PC-9 (cell line): ENCODE measurements at regions of chr9 and their contacts with region 1.

Region 1: GRCh38 chr9:82080265-82080664 is 91.7 kb downstream of the SPATA31D1 start:
- DNase-seq: no peak
- H3K4me3 ChIP-seq: no peak overlapping the region
- H3K27ac ChIP-seq: no peak overlapping the region
- H3K4me1 ChIP-seq: no peaks in the 10 kb centered on the region
- H3K27me3 ChIP-seq: no peaks in the 10 kb centered on the region
- CTCF ChIP-seq: no peak

Region 2: GRCh38 chr9:81999806-82000205 is 80.5 kb before region 1 on chr9:
- CTCF ChIA-PET with region 1: no interaction called
- POLR2A ChIA-PET with region 1: no interaction called
- intact Hi-C with region 1: no loop called
- DNase-seq: no peak
- H3K4me3 ChIP-seq: no peak overlapping the region
- H3K27ac ChIP-seq: no peak overlapping the region
- H3K4me1 ChIP-seq: no peaks in the 10 kb centered on the region
- H3K27me3 ChIP-seq: no peaks in the 10 kb centered on the region
- CTCF ChIP-seq: no peak

Region 3: DNA sequence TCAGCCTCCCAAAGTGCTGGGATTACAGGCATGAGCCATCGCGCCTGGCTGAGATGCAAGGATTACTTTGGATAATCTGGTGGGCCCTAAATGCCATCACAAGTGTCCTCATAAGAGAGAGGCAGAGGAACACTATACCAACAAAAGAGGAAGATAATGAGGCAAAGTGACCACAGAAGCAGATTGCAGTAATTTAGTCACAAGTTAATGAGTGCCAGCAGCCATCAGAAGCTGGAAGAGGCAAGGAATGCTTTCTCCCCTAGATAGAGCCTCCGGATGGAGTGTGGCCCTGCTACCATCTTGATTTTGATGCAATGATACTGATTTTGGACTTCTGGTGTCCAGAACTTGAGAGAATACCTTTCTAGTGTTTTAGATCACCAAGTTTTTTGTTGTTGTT is 30.6 kb after region 1 on chr9:
- CTCF ChIA-PET with region 1: no interaction called
- POLR2A ChIA-PET with region 1: no interaction called
- intact Hi-C with region 1: loop called (anchors 1 kb)
- DNase-seq: no peak
- H3K4me3 ChIP-seq: no peak overlapping the region
- H3K27ac ChIP-seq: no peak overlapping the region
- H3K4me1 ChIP-seq: no peaks in the 10 kb centered on the region
- H3K27me3 ChIP-seq: no peaks in the 10 kb centered on the region
- CTCF ChIP-seq: no peak